Mammary epithelial cell (primary cell): ENCODE measurements at regions of chr10 and their contacts with region 1.

Region 1: GRCh38 chr10:110414563-110415309 is 83.0 kb upstream of the DUSP5 start:
- DNase-seq: peak; percentile 91
- H3K4me3 ChIP-seq: no peak overlapping the region
- H3K27ac ChIP-seq: peak overlapping the region; percentile 56
- H3K4me1 ChIP-seq: peaks cover 62% of the 10 kb centered on the region
- H3K27me3 ChIP-seq: no peaks in the 10 kb centered on the region
- CTCF ChIP-seq: no peak

Region 2: GRCh38 chr10:110336111-110336721 is 78.5 kb before region 1 on chr10:
- CTCF ChIA-PET with region 1: no interaction called
- dilution Hi-C with region 1: no loop called
- in situ Hi-C with region 1: no loop called
- intact Hi-C with region 1: no loop called
- DNase-seq: peak; percentile 87
- H3K4me3 ChIP-seq: no peak overlapping the region
- H3K27ac ChIP-seq: peak overlapping the region; percentile 13
- H3K4me1 ChIP-seq: peaks cover 16% of the 10 kb centered on the region
- H3K27me3 ChIP-seq: no peaks in the 10 kb centered on the region
- CTCF ChIP-seq: peak in 1 of 2 donors; percentile 23

Region 3: GRCh38 chr10:110354322-110354766 is 60.4 kb before region 1 on chr10:
- CTCF ChIA-PET with region 1: interaction called, 3 read pairs
- dilution Hi-C with region 1: no loop called
- in situ Hi-C with region 1: no loop called
- intact Hi-C with region 1: loop called (anchors 1 kb)
- DNase-seq: peak; percentile 87
- H3K4me3 ChIP-seq: peak overlapping the region; percentile 25 to 33 (median 32)
- H3K27ac ChIP-seq: peak overlapping the region; percentile 99
- H3K4me1 ChIP-seq: peaks cover 59% of the 10 kb centered on the region
- H3K27me3 ChIP-seq: no peaks in the 10 kb centered on the region
- CTCF ChIP-seq: peak; percentile 83 to 86

Region 4: GRCh38 chr10:110395725-110396651 is 18.7 kb before region 1 on chr10:
- CTCF ChIA-PET with region 1: no interaction called
- dilution Hi-C with region 1: no loop called
- in situ Hi-C with region 1: no loop called
- intact Hi-C with region 1: loop called (anchors 1 kb)
- DNase-seq: peak; percentile 97
- H3K4me3 ChIP-seq: no peak overlapping the region
- H3K27ac ChIP-seq: peak overlapping the region; percentile 66
- H3K4me1 ChIP-seq: peaks cover 50% of the 10 kb centered on the region
- H3K27me3 ChIP-seq: no peaks in the 10 kb centered on the region
- CTCF ChIP-seq: no peak

Region 5: GRCh38 chr10:110492069-110492822 is 77.5 kb after region 1 on chr10:
- CTCF ChIA-PET with region 1: no interaction called
- dilution Hi-C with region 1: loop called (anchors 5 kb)
- in situ Hi-C with region 1: loop called in 1 of 2 experiments (anchors 5 kb)
- intact Hi-C with region 1: loop called (anchors 1 kb)
- DNase-seq: no peak
- H3K4me3 ChIP-seq: no peak overlapping the region
- H3K27ac ChIP-seq: no peak overlapping the region
- H3K4me1 ChIP-seq: peaks cover 51% of the 10 kb centered on the region
- H3K27me3 ChIP-seq: no peaks in the 10 kb centered on the region
- CTCF ChIP-seq: no peak

Region 6: DNA sequence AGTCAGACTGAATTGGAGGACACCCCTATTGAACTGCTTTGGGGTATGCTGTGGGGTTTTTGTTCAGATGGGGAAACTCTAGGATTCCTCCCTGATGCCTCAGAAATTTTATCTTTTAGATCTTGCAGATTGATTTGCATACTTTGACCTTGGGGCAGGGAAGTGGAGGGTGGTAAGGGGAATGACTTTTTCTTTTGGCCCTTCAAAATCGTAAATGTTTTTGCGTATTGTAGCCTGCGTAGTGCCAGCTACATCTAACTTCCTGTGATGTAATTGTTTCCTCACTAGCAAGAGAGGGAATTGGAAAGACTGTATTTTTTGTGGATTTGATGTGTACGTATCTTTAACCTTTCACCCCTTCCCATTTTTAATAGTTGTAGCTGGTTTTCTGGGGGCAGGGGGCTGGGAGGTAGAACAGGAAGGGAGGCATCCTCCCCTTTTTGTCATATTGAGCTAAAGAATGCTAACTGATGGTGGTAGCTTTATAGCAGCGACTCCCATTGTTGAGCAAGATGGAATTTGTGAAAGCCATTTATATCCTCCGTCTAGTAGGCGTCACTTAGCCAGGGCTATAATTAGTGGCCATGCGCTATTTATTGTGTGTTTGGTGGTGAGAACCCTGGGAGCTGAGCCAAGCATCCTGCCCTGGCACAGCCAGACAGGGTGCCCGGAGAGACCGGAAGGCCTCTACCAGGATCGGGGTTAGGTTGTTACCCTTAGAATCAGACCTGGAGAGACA is 94.2 kb after region 1 on chr10:
- CTCF ChIA-PET with region 1: no interaction called
- dilution Hi-C with region 1: no loop called
- in situ Hi-C with region 1: no loop called
- intact Hi-C with region 1: no loop called
- DNase-seq: no peak
- H3K4me3 ChIP-seq: no peak overlapping the region
- H3K27ac ChIP-seq: no peak overlapping the region
- H3K4me1 ChIP-seq: peaks cover 28% of the 10 kb centered on the region
- H3K27me3 ChIP-seq: no peaks in the 10 kb centered on the region
- CTCF ChIP-seq: no peak